ENCODE measurements at regions of chr14 and their contacts with region 1.

Region 1: GRCh38 chr14:74612350-74613021 is 449 bp upstream of the LTBP2 start:
- DNase-seq: peak; percentile 70 to 92 (median 83)
- ATAC-seq: peak; percentile 85
- H3K4me3 ChIP-seq: peak overlapping the region; percentile 64 to 79
- H3K4me3 Mint-ChIP-seq: peak overlapping the region; percentile 79
- H3K27ac ChIP-seq: no peak overlapping the region
- H3K27ac Mint-ChIP-seq: no peak overlapping the region
- H3K4me1 ChIP-seq: peaks cover 16% of the 10 kb centered on the region
- H3K4me1 Mint-ChIP-seq: peaks cover 39% of the 10 kb centered on the region
- H3K27me3 ChIP-seq: no peaks in the 10 kb centered on the region
- H3K27me3 Mint-ChIP-seq: no peaks in the 10 kb centered on the region
- CTCF ChIP-seq: peak; percentile 56

Region 2: GRCh38 chr14:73500360-73500759 is 1112.1 kb before region 1 on chr14:
- CTCF ChIA-PET with region 1: no interaction called
- POLR2A ChIA-PET with region 1: no interaction called
- intact Hi-C with region 1: no loop called
- DNase-seq: no peak
- ATAC-seq: no peak
- H3K4me3 ChIP-seq: no peak overlapping the region
- H3K4me3 Mint-ChIP-seq: no peak overlapping the region
- H3K27ac ChIP-seq: no peak overlapping the region
- H3K27ac Mint-ChIP-seq: no peak overlapping the region
- H3K4me1 ChIP-seq: peaks cover 1% of the 10 kb centered on the region
- H3K4me1 Mint-ChIP-seq: peaks cover 17% of the 10 kb centered on the region
- H3K27me3 ChIP-seq: no peaks in the 10 kb centered on the region
- H3K27me3 Mint-ChIP-seq: no peaks in the 10 kb centered on the region
- CTCF ChIP-seq: no peak

Region 3: DNA sequence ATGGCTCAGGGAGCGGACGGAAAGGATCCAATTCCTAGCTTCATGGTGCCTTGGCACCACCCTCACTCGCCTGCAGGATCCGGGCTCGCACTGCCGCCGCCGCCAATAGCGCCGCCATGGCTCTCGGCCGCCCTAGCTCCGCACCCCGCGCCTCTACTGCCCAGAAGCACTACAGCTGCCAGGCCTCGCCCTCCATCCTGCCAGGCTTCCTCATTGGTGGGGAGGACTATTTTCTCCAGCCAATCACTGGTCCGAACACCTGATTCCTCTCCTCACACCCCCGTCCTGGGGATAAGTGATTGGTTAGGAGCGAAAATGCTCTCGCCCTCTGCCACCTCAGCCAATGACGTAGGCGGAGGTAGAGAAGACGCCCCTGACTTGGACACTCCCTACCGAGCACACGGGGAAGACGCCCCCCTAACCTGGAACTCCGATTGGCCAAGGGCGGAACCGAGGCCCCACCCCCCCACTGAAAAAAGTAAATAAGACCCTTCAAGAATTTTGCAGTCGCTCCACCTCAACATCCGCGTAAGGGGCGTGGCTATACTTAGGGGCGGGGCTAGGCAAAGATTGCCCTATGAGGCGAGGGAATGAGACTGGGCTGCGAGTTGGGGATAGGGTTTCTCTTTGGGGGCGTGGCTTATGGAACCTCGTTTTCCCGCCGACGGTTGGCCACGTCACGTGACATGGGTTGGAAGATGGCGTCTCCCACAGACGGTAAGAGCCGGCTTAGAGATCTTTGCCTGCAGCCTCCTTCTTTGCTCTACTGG is 528.0 kb before region 1 on chr14 and contains the starts of genes ALDH6A1 and LIN52:
- CTCF ChIA-PET with region 1: no interaction called
- POLR2A ChIA-PET with region 1: no interaction called
- intact Hi-C with region 1: loop called in 1 of 2 experiments (anchors 10 kb)
- DNase-seq: peak; percentile 100
- ATAC-seq: peak; percentile 85
- H3K4me3 ChIP-seq: peak within 1 kb of the TSS; percentile 80 to 90
- H3K4me3 Mint-ChIP-seq: peak within 1 kb of the TSS; percentile 98
- H3K27ac ChIP-seq: peak within 1 kb of the TSS; percentile 70 to 73
- H3K27ac Mint-ChIP-seq: peak within 1 kb of the TSS; percentile 96
- H3K4me1 ChIP-seq: peaks cover 19% of the 10 kb centered on the region
- H3K4me1 Mint-ChIP-seq: peaks cover 33% of the 10 kb centered on the region
- H3K27me3 ChIP-seq: no peaks in the 10 kb centered on the region
- H3K27me3 Mint-ChIP-seq: no peaks in the 10 kb centered on the region
- CTCF ChIP-seq: no peak
- total RNA-seq, gene ALDH6A1: 3.8 to 4.0 TPM
- total RNA-seq, gene LIN52: 6.1 to 6.8 TPM

Region 4: DNA sequence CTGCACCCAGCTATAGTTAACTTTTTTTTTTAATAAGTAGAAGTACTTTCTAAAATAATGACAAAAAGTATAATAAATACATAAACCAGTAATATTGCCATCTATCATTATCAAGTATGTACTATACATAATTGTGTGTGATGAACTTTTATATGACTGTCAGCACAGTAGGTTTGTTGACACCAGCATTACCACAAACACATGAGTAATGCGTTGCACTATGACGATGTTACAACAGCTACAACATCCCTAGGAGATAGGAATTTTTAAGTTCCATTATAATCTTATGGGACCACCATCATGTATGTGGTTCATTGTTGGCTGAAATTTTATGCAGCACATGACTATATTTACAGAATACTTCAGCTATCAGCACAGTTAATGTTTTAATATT is 436.1 kb before region 1 on chr14:
- CTCF ChIA-PET with region 1: no interaction called
- POLR2A ChIA-PET with region 1: no interaction called
- intact Hi-C with region 1: no loop called
- DNase-seq: no peak
- ATAC-seq: no peak
- H3K4me3 ChIP-seq: no peak overlapping the region
- H3K4me3 Mint-ChIP-seq: no peak overlapping the region
- H3K27ac ChIP-seq: no peak overlapping the region
- H3K27ac Mint-ChIP-seq: no peak overlapping the region
- H3K4me1 ChIP-seq: no peaks in the 10 kb centered on the region
- H3K4me1 Mint-ChIP-seq: no peaks in the 10 kb centered on the region
- H3K27me3 ChIP-seq: no peaks in the 10 kb centered on the region
- H3K27me3 Mint-ChIP-seq: no peaks in the 10 kb centered on the region
- CTCF ChIP-seq: no peak

Region 5: DNA sequence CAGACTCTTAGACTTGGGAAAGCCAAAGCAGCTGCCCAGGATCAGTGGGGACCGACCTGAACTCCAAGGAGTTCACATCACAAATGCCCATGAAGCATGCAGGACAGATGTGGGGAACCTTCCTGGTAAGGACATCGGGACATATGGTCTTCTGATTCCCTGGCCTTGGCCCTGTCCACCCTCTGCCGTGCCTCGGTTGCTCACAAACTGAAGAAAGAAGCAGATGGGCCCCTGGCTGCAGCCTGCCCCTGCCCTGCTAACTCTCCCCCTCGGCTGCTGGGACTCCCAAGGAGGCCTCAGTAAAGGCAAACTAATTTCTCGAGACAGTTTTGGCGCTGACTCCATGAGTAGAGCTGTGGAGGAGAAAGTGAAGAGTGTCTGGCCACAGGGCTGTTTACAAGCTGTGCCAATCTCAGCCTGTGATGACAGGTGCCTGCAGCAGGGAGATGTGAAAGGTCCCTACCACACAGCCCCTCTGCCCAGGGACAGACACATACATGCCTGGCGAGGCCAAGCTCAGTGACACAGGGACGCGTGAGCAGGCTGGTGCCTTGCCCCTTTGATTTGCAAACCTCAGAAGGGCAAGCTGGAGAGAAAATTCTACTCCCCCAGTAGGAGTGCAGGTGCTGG is 70.3 kb before region 1 on chr14:
- CTCF ChIA-PET with region 1: no interaction called
- POLR2A ChIA-PET with region 1: no interaction called
- intact Hi-C with region 1: no loop called
- DNase-seq: no peak
- ATAC-seq: no peak
- H3K4me3 ChIP-seq: no peak overlapping the region
- H3K4me3 Mint-ChIP-seq: no peak overlapping the region
- H3K27ac ChIP-seq: no peak overlapping the region
- H3K27ac Mint-ChIP-seq: no peak overlapping the region
- H3K4me1 ChIP-seq: no peaks in the 10 kb centered on the region
- H3K4me1 Mint-ChIP-seq: no peaks in the 10 kb centered on the region
- H3K27me3 ChIP-seq: no peaks in the 10 kb centered on the region
- H3K27me3 Mint-ChIP-seq: no peaks in the 10 kb centered on the region
- CTCF ChIP-seq: no peak

Region 6: GRCh38 chr14:74599321-74599761 is 13.1 kb before region 1 on chr14:
- CTCF ChIA-PET with region 1: interaction called, 19 read pairs
- POLR2A ChIA-PET with region 1: no interaction called
- intact Hi-C with region 1: no loop called
- DNase-seq: no peak
- ATAC-seq: no peak
- H3K4me3 ChIP-seq: no peak overlapping the region
- H3K4me3 Mint-ChIP-seq: no peak overlapping the region
- H3K27ac ChIP-seq: no peak overlapping the region
- H3K27ac Mint-ChIP-seq: no peak overlapping the region
- H3K4me1 ChIP-seq: no peaks in the 10 kb centered on the region
- H3K4me1 Mint-ChIP-seq: no peaks in the 10 kb centered on the region
- H3K27me3 ChIP-seq: no peaks in the 10 kb centered on the region
- H3K27me3 Mint-ChIP-seq: no peaks in the 10 kb centered on the region
- CTCF ChIP-seq: no peak

Region 7: GRCh38 chr14:74684434-74684833 is 71.9 kb after region 1 on chr14:
- CTCF ChIA-PET with region 1: interaction called, 10 read pairs
- POLR2A ChIA-PET with region 1: interaction called, 5 read pairs
- intact Hi-C with region 1: loop called in 1 of 2 experiments (anchors 5 kb)
- DNase-seq: peak in 3 of 9 experiments; percentile 6 to 49 (median 40)
- ATAC-seq: peak; percentile 59
- H3K4me3 ChIP-seq: no peak overlapping the region
- H3K4me3 Mint-ChIP-seq: peak overlapping the region; percentile 39
- H3K27ac ChIP-seq: peak overlapping the region in 1 of 2 experiments; percentile 19
- H3K27ac Mint-ChIP-seq: peak overlapping the region; percentile 72
- H3K4me1 ChIP-seq: peaks cover 23% of the 10 kb centered on the region
- H3K4me1 Mint-ChIP-seq: peaks cover 31% of the 10 kb centered on the region
- H3K27me3 ChIP-seq: no peaks in the 10 kb centered on the region
- H3K27me3 Mint-ChIP-seq: no peaks in the 10 kb centered on the region
- CTCF ChIP-seq: no peak

Region 8: GRCh38 chr14:74793506-74794168 is 181.2 kb after region 1 on chr14:
- CTCF ChIA-PET with region 1: interaction called, 5 read pairs
- POLR2A ChIA-PET with region 1: interaction called, 3 read pairs
- intact Hi-C with region 1: loop called in 1 of 2 experiments (anchors 1 kb)
- DNase-seq: peak in 2 of 9 experiments; percentile 36 to 59
- ATAC-seq: peak; percentile 51
- H3K4me3 ChIP-seq: peak overlapping the region in 1 of 2 experiments; percentile 9
- H3K4me3 Mint-ChIP-seq: peak overlapping the region; percentile 70
- H3K27ac ChIP-seq: peak overlapping the region in 1 of 2 experiments; percentile 3
- H3K27ac Mint-ChIP-seq: peak overlapping the region; percentile 89
- H3K4me1 ChIP-seq: peaks cover 28% of the 10 kb centered on the region
- H3K4me1 Mint-ChIP-seq: peaks cover 47% of the 10 kb centered on the region
- H3K27me3 ChIP-seq: no peaks in the 10 kb centered on the region
- H3K27me3 Mint-ChIP-seq: no peaks in the 10 kb centered on the region
- CTCF ChIP-seq: peak; percentile 35

Region 9: DNA sequence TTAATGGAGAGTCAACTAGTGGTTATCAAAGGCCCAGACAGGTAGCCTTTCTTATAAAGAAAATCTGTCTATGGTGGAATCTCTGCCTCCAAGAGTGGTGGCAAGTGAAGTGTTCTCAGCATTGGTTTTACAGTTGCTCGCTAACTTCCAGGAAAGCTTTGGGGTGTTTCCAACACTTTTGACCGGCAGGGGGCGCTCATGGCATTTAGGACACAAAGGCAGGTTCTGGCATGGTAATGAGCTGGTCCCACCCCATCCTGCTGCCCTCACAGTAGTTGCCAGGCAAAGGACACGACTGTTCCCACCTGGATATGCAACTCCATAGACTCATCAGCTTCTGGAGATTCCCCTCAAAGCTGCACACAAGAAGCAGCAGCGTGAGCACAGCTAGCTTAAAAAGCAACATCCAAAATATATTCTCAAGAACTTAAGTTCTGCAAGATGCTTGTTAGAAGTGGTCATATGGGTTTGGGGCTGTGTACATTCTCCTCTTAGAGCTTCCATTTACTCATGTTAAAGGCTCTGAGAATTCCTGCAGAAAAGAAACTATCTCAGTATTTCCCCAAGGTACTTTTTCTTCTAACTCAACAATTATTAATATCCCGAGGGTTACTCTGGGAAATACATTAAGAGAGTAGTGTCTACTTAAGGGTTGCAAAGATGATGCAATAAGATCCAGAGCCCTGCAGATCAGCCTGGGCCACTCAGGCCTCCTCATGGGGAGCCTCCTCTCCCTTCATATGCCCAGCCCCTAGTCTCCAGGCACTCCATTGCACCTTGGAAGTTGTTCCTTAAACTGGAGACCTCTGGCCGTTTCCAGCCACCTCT is 248.6 kb after region 1 on chr14:
- CTCF ChIA-PET with region 1: interaction called, 9 read pairs
- POLR2A ChIA-PET with region 1: interaction called, 3 read pairs
- intact Hi-C with region 1: loop called in 1 of 2 experiments (anchors 5 kb)
- DNase-seq: peak; percentile 85 to 99 (median 90)
- ATAC-seq: peak; percentile 84
- H3K4me3 ChIP-seq: no peak overlapping the region
- H3K4me3 Mint-ChIP-seq: no peak overlapping the region
- H3K27ac ChIP-seq: no peak overlapping the region
- H3K27ac Mint-ChIP-seq: no peak overlapping the region
- H3K4me1 ChIP-seq: peaks cover 4% of the 10 kb centered on the region
- H3K4me1 Mint-ChIP-seq: peaks cover 7% of the 10 kb centered on the region
- H3K27me3 ChIP-seq: no peaks in the 10 kb centered on the region
- H3K27me3 Mint-ChIP-seq: no peaks in the 10 kb centered on the region
- CTCF ChIP-seq: peak; percentile 85

Region 10: GRCh38 chr14:75293920-75294642 is 681.6 kb after region 1 on chr14:
- CTCF ChIA-PET with region 1: no interaction called
- POLR2A ChIA-PET with region 1: no interaction called
- intact Hi-C with region 1: loop called in 1 of 2 experiments (anchors 2 kb)
- DNase-seq: peak; percentile 90 to 99 (median 94)
- ATAC-seq: peak; percentile 87
- H3K4me3 ChIP-seq: peak overlapping the region; percentile 31 to 62
- H3K4me3 Mint-ChIP-seq: peak overlapping the region; percentile 88
- H3K27ac ChIP-seq: peak overlapping the region; percentile 95 to 99
- H3K27ac Mint-ChIP-seq: peak overlapping the region; percentile 93
- H3K4me1 ChIP-seq: peaks cover 23% of the 10 kb centered on the region
- H3K4me1 Mint-ChIP-seq: peaks cover 23% of the 10 kb centered on the region
- H3K27me3 ChIP-seq: peaks cover 0 to 2% of the 10 kb centered on the region in 2 experiments
- H3K27me3 Mint-ChIP-seq: no peaks in the 10 kb centered on the region
- CTCF ChIP-seq: no peak

Measured in CD8-positive, alpha-beta T cell (primary cell).